ENCODE measurements at regions of chr7 and their contacts with region 1.

Region 1: DNA sequence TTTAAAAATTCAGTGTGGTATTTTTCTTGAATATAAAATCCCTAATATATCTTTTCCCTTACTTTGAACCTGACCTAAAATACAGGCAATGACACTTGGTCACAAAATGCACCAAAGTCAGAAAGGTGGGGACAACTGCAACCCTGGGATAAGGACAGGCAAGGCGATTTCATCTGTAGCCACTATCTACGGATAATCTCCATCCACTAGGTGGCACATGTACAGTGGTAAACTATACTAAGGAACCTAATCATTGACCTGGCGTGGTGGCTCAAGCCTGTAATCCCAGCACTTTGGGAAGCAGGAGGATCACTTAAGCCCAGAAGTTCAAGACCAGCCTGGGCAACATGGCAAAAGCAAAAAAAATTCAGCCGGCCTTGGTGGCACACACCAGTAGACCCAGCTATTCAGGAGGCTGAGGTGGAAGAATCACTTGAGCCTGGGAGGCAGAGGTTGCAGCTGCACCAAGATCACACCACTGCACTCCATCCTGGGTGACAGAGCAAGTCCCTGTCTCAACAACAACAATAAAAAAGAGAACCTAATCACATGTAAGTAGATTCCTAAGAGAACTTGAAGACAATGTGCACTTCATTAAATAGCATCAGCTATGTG is 98.9 kb downstream of the KMT2C start:
- DNase-seq: peak; percentile 39
- ATAC-seq: peak; percentile 94
- H3K4me3 ChIP-seq: no peak overlapping the region
- H3K27ac ChIP-seq: no peak overlapping the region
- H3K4me1 ChIP-seq: no peaks in the 10 kb centered on the region
- H3K27me3 ChIP-seq: no peaks in the 10 kb centered on the region
- CTCF ChIP-seq: peak; percentile 42 to 71 (median 54); a peak in 5 of 6 replicates
- POLR2A ChIP-seq: no peak
- RAD21 ChIP-seq: peak; percentile 70

Region 2: DNA sequence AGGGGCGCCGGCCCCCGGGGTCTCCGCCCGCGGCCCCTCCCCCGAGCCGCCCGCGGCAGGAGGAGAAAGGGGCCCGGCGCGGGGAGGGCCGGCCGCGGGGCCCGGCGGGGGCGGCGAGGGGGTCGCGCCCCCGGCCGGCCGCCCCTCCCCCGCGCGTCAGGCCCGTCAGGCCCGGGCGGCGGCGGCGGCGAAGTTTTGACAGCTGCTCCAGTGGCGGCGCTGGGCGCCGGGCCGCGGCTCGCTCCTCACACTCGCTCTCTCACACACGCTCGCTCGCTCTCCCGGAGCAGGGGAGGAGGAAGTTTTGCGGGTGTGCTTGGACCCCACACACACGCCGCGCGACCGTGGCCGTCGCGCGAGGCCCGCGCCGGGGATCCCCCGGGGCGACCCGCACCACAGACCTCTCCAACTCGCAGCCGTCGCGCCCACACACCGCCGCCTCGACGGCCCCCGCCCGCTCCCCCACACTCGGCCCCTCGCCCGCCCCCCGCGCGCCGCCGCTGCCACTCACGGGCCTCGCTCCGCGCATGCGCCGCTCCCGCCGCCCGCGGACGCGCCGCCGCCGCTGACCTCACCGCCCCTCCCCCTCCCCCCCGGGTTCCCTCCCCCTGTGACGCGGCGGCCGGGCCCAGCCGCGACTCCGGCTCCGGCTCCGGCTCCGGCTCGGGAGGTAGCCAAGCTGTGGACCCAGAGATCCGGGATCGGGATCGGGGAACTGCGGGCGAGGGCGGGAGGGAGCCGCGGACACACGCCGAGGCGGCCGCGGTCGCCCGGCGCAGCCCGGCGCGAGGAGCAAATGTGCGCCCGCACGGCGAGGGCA is 99.5 kb after region 1 on chr7:
- CTCF ChIA-PET with region 1: no interaction called
- POLR2A ChIA-PET with region 1: no interaction called
- RAD21 ChIA-PET with region 1: no interaction called
- intact Hi-C with region 1: loop called (anchors 10 kb)
- DNase-seq: peak; percentile 78
- ATAC-seq: peak; percentile 78
- H3K4me3 ChIP-seq: peak overlapping the region; percentile 42 to 58
- H3K27ac ChIP-seq: peak overlapping the region; percentile 91
- H3K4me1 ChIP-seq: peaks cover 7 to 14% of the 10 kb centered on the region in 2 experiments
- H3K27me3 ChIP-seq: no peaks in the 10 kb centered on the region
- CTCF ChIP-seq: no peak
- POLR2A ChIP-seq: peak; percentile 24
- RAD21 ChIP-seq: no peak

Region 3: DNA sequence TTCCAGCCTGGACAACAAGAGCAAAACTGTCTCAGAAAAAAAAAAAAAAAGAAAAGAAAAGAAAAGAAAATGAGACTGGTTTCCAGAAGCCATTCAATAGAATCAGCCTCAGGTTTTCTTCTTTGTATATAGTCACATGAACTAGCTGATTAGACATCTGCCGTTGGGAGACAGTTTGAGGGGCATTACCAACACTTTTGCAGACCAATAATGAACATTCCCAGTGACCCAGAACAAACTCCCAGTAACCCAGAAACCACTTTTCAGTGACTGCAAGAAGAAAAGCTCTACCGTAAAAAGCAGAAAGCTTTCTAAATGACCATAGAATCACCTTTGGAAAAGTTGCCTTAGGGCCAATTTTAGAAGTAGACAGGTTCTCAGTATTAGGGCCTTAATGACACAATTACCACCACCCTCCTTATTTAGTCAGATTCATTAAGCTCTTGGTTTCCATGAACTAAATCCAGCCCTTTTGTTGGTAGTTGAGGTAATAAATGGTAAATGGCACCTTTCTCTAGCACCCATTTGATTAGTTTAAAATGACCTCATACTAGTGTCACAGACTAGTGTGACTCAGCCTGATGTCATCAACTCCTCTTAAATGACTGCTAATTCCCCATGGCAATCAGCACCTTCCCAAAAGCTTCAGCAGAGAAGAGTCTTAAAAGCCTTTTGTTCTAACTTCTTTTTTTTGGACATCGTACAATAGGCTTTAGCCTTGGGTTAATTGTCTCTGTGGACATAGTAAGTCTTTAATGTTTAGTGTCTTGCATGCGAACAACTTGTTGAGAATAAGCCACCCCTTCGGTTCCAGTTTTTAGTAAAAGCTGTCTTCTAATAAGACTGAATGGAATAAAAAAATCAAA is 372.7 kb after region 1 on chr7:
- CTCF ChIA-PET with region 1: interaction called, 7 read pairs
- POLR2A ChIA-PET with region 1: no interaction called
- RAD21 ChIA-PET with region 1: interaction called in 1 of 2 experiments, 7 read pairs
- intact Hi-C with region 1: loop called (anchors 1 kb)
- DNase-seq: peak; percentile 81
- ATAC-seq: peak; percentile 28; the same call in 1 of the 2 replicates
- H3K4me3 ChIP-seq: peak overlapping the region in 1 of 2 experiments; percentile 33; a peak in 2 of 4 replicates
- H3K27ac ChIP-seq: no peak overlapping the region; the same call in 1 of the 2 replicates
- H3K4me1 ChIP-seq: peaks cover 27 to 34% of the 10 kb centered on the region in 2 experiments
- H3K27me3 ChIP-seq: no peaks in the 10 kb centered on the region
- CTCF ChIP-seq: no peak
- POLR2A ChIP-seq: no peak
- RAD21 ChIP-seq: no peak

Region 4: GRCh38 chr7:153193144-153193595 is 856.3 kb after region 1 on chr7:
- CTCF ChIA-PET with region 1: no interaction called
- POLR2A ChIA-PET with region 1: no interaction called
- RAD21 ChIA-PET with region 1: no interaction called
- intact Hi-C with region 1: no loop called
- DNase-seq: no peak
- ATAC-seq: peak; percentile 85
- H3K4me3 ChIP-seq: no peak overlapping the region
- H3K27ac ChIP-seq: no peak overlapping the region
- H3K4me1 ChIP-seq: no peaks in the 10 kb centered on the region
- H3K27me3 ChIP-seq: peaks cover 3% of the 10 kb centered on the region; the same call in 1 of the 2 replicates
- CTCF ChIP-seq: peak in 2 of 3 experiments; percentile 66 to 67; a peak in 4 of 6 replicates
- POLR2A ChIP-seq: no peak
- RAD21 ChIP-seq: peak; percentile 58

Measured in HCT116 (cell line).